ENCODE measurements at regions of chr12 and their contacts with region 1.

Region 1: DNA sequence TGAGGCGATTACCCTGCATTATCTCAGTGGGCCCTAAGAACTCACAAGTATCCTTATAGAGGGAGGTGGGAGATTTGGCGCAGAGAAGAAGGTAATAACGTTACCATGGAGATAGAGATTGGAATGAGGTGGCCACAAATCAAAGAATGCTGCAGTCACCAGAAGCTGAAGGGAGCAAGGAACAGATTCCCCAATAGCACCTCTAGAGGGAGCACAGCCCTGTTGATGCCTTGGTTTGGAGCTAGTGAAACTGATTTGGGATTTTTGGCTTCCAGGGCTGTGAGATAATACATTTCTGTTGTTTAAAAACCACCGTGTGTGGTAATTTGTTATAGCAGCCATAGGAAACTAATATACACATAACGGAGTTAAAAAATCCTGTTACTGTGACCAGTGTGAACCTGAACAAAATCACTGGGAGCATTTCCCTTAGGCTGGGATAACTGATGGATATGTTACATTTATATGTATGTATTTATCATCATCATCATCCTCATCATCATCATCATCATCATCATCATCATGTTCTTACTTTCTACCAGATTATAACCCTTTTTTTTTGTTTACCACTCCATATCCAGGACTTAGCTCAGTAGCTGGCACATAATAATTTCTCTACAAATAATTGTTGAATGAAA is 100.3 kb downstream of the LIN7A start:
- DNase-seq: no peak
- H3K4me3 ChIP-seq: no peak overlapping the region
- H3K27ac ChIP-seq: no peak overlapping the region
- H3K4me1 ChIP-seq: peaks cover 0 to 23% (median 13%) of the 10 kb centered on the region in 4 donors
- H3K27me3 ChIP-seq: no peaks in the 10 kb centered on the region
- CTCF ChIP-seq: peak; percentile 37 to 64

Region 2: GRCh38 chr12:80877721-80878265 is 40.3 kb after region 1 on chr12:
- intact Hi-C with region 1: no loop called
- DNase-seq: no peak
- H3K4me3 ChIP-seq: no peak overlapping the region
- H3K27ac ChIP-seq: peak overlapping the region; percentile 26 to 49
- H3K4me1 ChIP-seq: peaks cover 0 to 33% (median 10%) of the 10 kb centered on the region in 4 donors
- H3K27me3 ChIP-seq: no peaks in the 10 kb centered on the region
- CTCF ChIP-seq: no peak

Region 3: DNA sequence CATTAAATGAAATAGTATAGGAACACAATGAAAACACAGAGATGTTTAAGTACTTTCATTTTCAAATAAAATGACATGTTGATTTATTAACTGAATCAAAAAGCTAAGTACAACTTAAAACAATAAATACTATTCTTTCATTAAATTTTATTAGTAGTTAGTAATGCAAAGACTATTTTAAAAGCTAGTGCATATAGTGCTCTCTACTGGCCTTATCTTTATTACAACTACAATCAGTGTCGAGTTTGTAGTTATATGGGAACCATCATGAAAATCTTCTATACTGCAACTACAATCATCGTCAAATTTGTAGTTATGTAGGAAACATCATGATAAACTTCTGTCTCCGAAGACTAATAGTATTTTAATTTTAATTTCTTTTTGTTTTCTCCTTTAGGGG is 109.1 kb after region 1 on chr12:
- intact Hi-C with region 1: loop called (anchors 5 kb)
- DNase-seq: no peak
- H3K4me3 ChIP-seq: no peak overlapping the region
- H3K27ac ChIP-seq: no peak overlapping the region
- H3K4me1 ChIP-seq: no peaks in the 10 kb centered on the region
- H3K27me3 ChIP-seq: no peaks in the 10 kb centered on the region
- CTCF ChIP-seq: no peak

Measured in tibial artery (tissue), 4 donors.